B cell (primary cell): ENCODE measurements at regions of chr4 and their contacts with region 1.

Region 1: GRCh38 chr4:90071289-90072235 is 55.6 kb upstream of the CCSER1 start:
- DNase-seq: peak; percentile 76
- ATAC-seq: peak; percentile 83
- H3K4me3 ChIP-seq: peak overlapping the region in 4 of 5 experiments; percentile 3 to 29 (median 15)
- H3K4me3 Mint-ChIP-seq: peak overlapping the region; percentile 74
- H3K27ac ChIP-seq: peak overlapping the region; percentile 4 to 27
- H3K27ac Mint-ChIP-seq: peak overlapping the region; percentile 2
- H3K4me1 ChIP-seq: peaks cover 18 to 29% of the 10 kb centered on the region in 2 donors
- H3K4me1 Mint-ChIP-seq: peaks cover 33% of the 10 kb centered on the region
- H3K27me3 ChIP-seq: peaks cover 0 to 4% (median 0%) of the 10 kb centered on the region in 4 experiments
- H3K27me3 Mint-ChIP-seq: peaks cover 15% of the 10 kb centered on the region
- CTCF ChIP-seq: no peak

Region 2: GRCh38 chr4:90025248-90025647 is 46.3 kb before region 1 on chr4:
- CTCF ChIA-PET with region 1: no interaction called
- POLR2A ChIA-PET with region 1: no interaction called
- intact Hi-C with region 1: loop called (anchors 5 kb)
- DNase-seq: peak; percentile 28
- ATAC-seq: no peak
- H3K4me3 ChIP-seq: no peak overlapping the region
- H3K4me3 Mint-ChIP-seq: no peak overlapping the region
- H3K27ac ChIP-seq: no peak overlapping the region
- H3K27ac Mint-ChIP-seq: no peak overlapping the region
- H3K4me1 ChIP-seq: peaks cover 19 to 33% of the 10 kb centered on the region in 2 donors
- H3K4me1 Mint-ChIP-seq: peaks cover 30% of the 10 kb centered on the region
- H3K27me3 ChIP-seq: no peaks in the 10 kb centered on the region
- H3K27me3 Mint-ChIP-seq: no peaks in the 10 kb centered on the region
- CTCF ChIP-seq: peak; percentile 52